ENCODE measurements at regions of chr1 and their contacts with region 1.

Region 1: DNA sequence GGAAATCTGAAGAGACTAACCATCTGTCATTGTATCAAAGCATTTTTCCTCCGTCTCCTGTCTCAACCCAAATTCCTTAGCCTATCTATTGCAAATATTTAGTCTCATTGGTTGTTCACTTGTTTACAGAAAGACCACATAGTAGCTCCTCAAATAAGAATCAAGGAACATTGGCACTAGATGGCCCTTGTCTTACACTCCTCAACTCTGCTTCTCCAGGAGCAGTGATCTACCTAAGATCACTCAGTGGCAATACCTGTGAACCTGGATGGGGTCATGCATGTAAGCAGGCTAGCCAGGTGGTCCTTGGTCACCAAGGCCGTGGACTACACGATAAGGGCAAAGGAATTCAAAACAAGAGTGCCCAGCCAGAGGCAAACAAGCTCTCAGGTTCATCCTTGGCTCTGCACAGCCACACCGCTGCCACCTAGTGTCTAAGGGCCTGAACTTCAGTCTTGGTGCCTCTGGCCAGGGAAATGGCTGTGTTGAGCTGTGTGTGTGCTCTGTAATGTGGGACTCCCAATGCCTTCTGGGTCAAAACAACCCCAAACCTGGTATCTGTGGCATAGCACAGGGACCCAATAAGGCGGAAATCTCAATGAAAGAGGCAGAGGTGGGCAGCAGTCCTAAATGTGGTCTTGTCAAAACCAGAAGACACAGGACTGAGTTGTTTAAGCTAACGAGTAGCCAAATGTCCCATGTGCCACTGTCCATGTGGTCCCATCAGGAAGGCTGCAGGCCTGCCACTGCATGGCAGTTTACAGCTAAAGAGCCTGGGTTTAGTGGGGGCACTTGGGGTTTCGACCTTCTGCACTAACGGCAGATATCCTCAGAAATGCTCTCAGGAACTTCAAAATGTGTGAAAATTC is 54.5 kb downstream of the GPR161 start:
- DNase-seq: peak; percentile 59 to 83 (median 64)
- ATAC-seq: peak; percentile 39 to 81 (median 68)
- H3K4me3 ChIP-seq: no peak overlapping the region
- H3K27ac ChIP-seq: peak overlapping the region in 5 of 12 donors; percentile 6 to 62 (median 48)
- H3K4me1 ChIP-seq: peaks cover 0 to 55% (median 29%) of the 10 kb centered on the region in 12 donors
- H3K27me3 ChIP-seq: no peaks in the 10 kb centered on the region
- CTCF ChIP-seq: peak; percentile 74 to 93 (median 84)
- POLR2A ChIP-seq: no peak

Region 2: DNA sequence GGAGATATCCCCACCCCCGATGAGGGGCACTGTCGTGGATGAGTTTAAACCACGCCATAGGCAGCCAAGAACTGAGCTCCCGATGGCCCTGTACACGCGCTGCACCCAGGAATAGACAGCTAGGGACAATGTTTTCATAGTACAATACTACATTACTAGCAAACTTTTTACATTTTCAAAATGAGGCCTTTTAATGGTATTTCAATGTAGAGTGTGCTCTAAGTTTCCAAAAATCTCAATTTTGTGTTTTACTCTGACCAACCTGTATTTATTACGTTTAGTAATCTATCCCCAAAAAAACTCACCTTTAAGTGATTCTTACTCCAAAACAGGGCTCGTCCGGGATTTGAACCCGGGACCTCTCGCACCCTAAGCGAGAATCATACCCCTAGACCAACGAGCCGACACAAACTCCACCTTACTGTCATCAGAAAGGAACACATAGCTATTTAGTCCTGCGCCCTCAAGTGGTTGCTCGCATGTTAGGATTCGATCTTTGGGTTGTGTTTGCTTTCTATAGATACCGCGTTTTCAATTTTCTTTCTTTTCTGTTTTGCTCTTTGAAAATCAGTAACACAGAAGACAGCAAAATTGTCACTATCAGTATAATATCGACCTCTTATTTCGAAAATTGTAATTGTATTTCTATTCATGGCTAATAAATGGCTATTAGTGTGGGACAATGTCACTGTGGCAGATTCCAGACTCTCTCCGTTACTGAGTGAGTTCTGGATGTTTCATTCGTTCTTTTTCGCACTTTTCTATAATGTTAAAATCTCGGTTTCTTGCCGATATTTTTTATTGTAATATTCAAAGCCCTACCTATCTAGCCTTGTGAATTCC is 366.9 kb before region 1 on chr1:
- intact Hi-C with region 1: loop called in 5 of 10 experiments (anchors 5 to 10 kb)
- DNase-seq: peak; percentile 69 to 86 (median 85)
- ATAC-seq: peak; percentile 37 to 72 (median 60)
- H3K4me3 ChIP-seq: peak overlapping the region; percentile 39 to 86 (median 76)
- H3K27ac ChIP-seq: peak overlapping the region in 11 of 12 donors; percentile 84 to 94 (median 88)
- H3K4me1 ChIP-seq: peaks cover 0 to 18% (median 4%) of the 10 kb centered on the region in 12 donors
- H3K27me3 ChIP-seq: no peaks in the 10 kb centered on the region
- CTCF ChIP-seq: peak; percentile 63 to 95 (median 77)
- POLR2A ChIP-seq: no peak

Region 3: GRCh38 chr1:167721617-167722151 is 360.6 kb before region 1 on chr1 and contains the start of gene MPZL1:
- intact Hi-C with region 1: loop called in 5 of 10 experiments (anchors 5 to 10 kb)
- DNase-seq: peak; percentile 96 to 98 (median 97)
- ATAC-seq: peak; percentile 98 to 99 (median 99)
- H3K4me3 ChIP-seq: peak within 1 kb of the TSS; percentile 88 to 100 (median 94)
- H3K27ac ChIP-seq: peak within 1 kb of the TSS; percentile 78 to 93 (median 90)
- H3K4me1 ChIP-seq: peaks cover 4 to 49% (median 32%) of the 10 kb centered on the region in 12 donors
- H3K27me3 ChIP-seq: no peaks in the 10 kb centered on the region
- CTCF ChIP-seq: no peak
- POLR2A ChIP-seq: peak in 1 of 2 donors; percentile 90
- total RNA-seq, gene MPZL1: 21.2 to 56.3 (median 29.7) TPM

Region 4: DNA sequence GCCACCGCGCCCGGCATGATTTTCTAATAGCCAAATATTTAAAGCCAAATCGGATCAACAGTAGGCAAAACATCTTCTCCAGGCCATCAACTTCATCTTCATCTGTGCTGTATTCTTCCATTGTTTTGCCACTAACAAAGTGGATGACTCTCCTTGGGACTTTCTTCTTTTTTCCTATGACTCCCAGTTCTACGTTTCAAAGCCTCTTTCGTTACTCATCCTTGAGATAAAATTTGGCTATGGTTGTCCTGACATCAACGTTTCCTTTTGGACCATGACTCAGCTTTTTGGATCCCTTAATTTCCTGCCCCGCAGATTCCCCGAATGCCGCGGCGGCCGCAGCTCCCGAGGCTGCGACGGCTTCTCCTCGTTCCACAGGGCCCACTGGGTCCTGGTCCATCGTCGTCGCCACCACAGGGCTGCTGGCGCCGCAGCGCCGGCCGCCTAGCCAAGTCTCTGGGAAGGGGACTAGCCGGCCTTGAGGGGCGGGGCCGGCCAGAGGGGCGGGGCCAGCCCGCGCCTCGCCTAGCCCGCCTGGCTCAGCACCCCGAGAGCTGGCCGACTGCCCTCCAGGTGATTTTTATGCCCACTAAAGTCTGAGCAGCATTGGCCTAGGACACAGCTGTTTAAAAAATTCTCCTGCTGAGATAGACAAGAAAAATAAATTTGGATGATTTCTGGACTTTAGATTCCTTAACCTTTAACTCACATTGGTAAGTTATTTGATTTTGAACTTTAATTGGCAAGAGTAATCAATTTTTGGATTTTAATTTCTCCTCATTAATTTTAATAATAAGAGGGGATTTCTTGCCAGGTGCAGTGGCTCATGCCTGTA is 262.2 kb before region 1 on chr1:
- intact Hi-C with region 1: loop called in 1 of 10 experiments (anchors 10 kb)
- DNase-seq: peak; percentile 79 to 92 (median 85)
- ATAC-seq: peak; percentile 87 to 98 (median 97)
- H3K4me3 ChIP-seq: peak overlapping the region in 10 of 12 donors; percentile 36 to 51 (median 45)
- H3K27ac ChIP-seq: peak overlapping the region; percentile 52 to 81 (median 73)
- H3K4me1 ChIP-seq: peaks cover 0 to 15% (median 4%) of the 10 kb centered on the region in 12 donors
- H3K27me3 ChIP-seq: no peaks in the 10 kb centered on the region
- CTCF ChIP-seq: no peak
- POLR2A ChIP-seq: peak in 1 of 2 donors; percentile 60

Region 5: DNA sequence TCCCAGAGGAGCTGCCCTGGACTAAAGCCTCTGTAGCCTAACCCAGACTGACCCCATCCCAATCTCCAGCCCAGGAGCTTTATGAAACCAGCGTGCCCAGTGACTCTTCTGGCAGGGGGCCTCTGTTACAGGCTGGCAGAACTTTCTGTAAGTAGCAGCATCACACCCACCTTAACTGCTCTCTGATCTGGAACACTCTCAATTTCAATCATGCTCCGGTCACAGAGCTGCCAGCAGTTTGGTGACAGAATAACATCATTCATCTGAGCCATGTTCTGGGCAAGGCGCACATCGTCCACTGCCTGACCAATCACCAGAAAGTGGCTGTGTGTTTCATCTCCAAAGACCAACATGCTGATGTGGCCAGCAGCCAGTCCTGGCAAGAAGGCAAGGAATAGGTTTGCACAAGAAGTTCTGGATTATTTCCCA is 183.0 kb before region 1 on chr1:
- intact Hi-C with region 1: no loop called
- DNase-seq: peak in 3 of 5 donors; percentile 15 to 40 (median 36)
- ATAC-seq: peak; percentile 75 to 96 (median 85)
- H3K4me3 ChIP-seq: no peak overlapping the region
- H3K27ac ChIP-seq: no peak overlapping the region
- H3K4me1 ChIP-seq: peaks cover 0 to 7% (median 0%) of the 10 kb centered on the region in 12 donors
- H3K27me3 ChIP-seq: no peaks in the 10 kb centered on the region
- CTCF ChIP-seq: no peak
- POLR2A ChIP-seq: no peak

Region 6: DNA sequence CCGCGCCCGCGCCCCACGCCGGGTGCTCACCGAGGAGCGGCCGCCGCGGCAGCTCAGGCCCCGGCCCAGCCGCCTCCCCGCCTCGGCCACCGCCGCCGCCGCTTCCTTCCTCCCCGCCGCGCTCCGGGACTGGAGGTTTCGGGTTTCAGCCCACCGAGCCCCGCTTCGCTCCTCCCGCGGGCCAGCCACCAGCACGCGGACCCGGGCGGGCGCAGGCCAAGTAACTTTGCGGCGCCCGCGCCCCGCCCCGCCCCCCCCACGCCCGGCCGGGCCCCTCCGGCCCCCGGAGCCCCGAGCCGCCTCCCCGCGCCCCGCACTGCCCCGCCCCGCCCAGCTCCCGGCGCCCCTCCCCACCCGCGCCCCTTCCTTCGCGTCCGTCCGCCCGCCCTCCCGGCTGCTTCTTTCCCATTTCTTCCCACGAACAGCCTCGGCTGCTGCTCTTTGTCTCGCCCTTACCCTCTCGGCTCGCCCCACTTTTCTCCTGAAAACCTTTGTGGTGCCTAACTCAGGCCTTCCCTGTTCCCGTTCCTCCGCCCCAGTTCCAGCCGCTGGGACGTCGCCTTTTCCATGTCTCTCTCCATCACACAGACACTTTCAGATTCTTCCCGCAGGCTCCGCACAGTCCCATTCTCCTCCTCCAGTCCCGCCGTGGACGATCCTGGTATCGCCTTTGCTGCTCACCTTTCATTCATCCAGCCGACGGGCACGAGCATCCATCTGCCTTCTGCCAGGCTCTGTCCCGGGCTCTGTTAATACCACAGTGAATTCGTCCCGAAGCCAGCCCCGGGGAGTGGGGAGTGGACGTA is 54.7 kb after region 1 on chr1 and contains the start of gene GPR161:
- intact Hi-C with region 1: loop called in 5 of 10 experiments (anchors 5 to 10 kb)
- DNase-seq: peak; percentile 50 to 78 (median 64)
- ATAC-seq: peak in 3 of 4 donors; percentile 18 to 70 (median 63)
- H3K4me3 ChIP-seq: peak within 1 kb of the TSS; percentile 40 to 92 (median 81)
- H3K27ac ChIP-seq: peak within 1 kb of the TSS; percentile 28 to 83 (median 74)
- H3K4me1 ChIP-seq: peaks cover 0 to 20% (median 12%) of the 10 kb centered on the region in 12 donors
- H3K27me3 ChIP-seq: peaks cover 0 to 24% (median 0%) of the 10 kb centered on the region in 9 donors
- CTCF ChIP-seq: no peak
- POLR2A ChIP-seq: no peak
- total RNA-seq, gene GPR161: 1.4 to 4.8 (median 2.4) TPM

Region 7: GRCh38 chr1:168145184-168146159 is 63.2 kb after region 1 on chr1:
- intact Hi-C with region 1: loop called in 2 of 10 experiments (anchors 5 to 10 kb)
- DNase-seq: peak; percentile 81 to 94 (median 83)
- ATAC-seq: peak; percentile 87 to 95 (median 92)
- H3K4me3 ChIP-seq: peak overlapping the region in 1 of 12 donors; percentile 18
- H3K27ac ChIP-seq: no peak overlapping the region
- H3K4me1 ChIP-seq: peaks cover 0 to 6% (median 0%) of the 10 kb centered on the region in 12 donors
- H3K27me3 ChIP-seq: no peaks in the 10 kb centered on the region
- CTCF ChIP-seq: peak; percentile 85 to 98 (median 94)
- POLR2A ChIP-seq: no peak

Region 8: GRCh38 chr1:168161459-168161858 is 79.2 kb after region 1 on chr1:
- intact Hi-C with region 1: no loop called
- DNase-seq: no peak
- ATAC-seq: no peak
- H3K4me3 ChIP-seq: no peak overlapping the region
- H3K27ac ChIP-seq: no peak overlapping the region
- H3K4me1 ChIP-seq: no peaks in the 10 kb centered on the region
- H3K27me3 ChIP-seq: no peaks in the 10 kb centered on the region
- CTCF ChIP-seq: no peak
- POLR2A ChIP-seq: no peak

Measured in heart left ventricle (tissue), 16 donors.